SK-N-SH (cell line): ENCODE measurements at regions of chr2 and their contacts with region 1.

Region 1: GRCh38 chr2:27409321-27410073 is at the start of gene PPM1G:
- DNase-seq: peak; percentile 99
- H3K4me3 ChIP-seq: peak within 1 kb of the TSS; percentile 78 to 98
- H3K27ac ChIP-seq: peak within 1 kb of the TSS; percentile 82 to 90
- H3K4me1 ChIP-seq: peaks cover 0 to 6% of the 10 kb centered on the region in 2 experiments; a peak in 2 of 4 replicates
- H3K27me3 ChIP-seq: no peaks in the 10 kb centered on the region
- CTCF ChIP-seq: no peak
- EP300 ChIP-seq: no peak
- RAD21 ChIP-seq: no peak
- polyA plus RNA-seq, gene PPM1G: 99.7 and 113 TPM in 2 replicates

Region 2: DNA sequence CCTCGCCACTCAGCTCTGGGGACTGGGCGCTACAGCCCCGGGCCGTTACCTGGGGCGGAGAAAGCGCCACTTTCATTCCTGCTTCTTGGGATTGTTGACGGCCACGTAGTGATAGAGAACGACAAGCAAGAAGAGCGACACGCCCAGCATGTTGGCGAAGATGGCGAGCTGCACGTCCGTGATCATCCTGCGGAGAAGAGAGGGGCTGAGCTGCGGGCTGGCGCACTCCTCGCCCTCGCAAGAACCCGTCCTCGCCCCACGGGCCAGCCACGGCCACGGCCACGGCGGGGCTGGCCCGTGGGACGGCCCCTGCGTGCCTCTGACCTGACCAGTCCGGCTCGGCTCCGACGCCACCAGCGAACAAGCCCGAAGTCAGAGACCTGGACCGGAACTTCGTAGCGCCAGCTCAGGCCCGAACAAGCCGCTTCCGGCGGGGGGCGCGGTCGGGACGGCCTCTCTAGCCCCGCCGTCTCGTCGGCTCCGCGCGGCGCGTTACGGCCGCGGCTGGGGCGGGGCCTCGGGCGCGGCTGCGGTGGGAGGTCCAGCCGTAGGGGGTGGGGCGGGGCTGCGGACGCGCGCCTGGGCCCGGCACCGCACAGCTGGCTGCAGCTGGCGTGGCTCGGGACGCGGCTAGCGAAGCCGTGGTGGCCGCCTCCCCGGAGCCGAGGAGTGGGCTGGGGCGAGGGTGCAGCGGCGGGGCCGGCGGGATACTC is 338.1 kb before region 1 on chr2 and contains the start of gene OST4:
- CTCF ChIA-PET with region 1: no interaction called
- POLR2A ChIA-PET with region 1: no interaction called
- DNase-seq: peak; percentile 100
- H3K4me3 ChIP-seq: peak within 1 kb of the TSS; percentile 97 to 98
- H3K27ac ChIP-seq: peak within 1 kb of the TSS; percentile 89 to 98
- H3K4me1 ChIP-seq: peaks cover 44 to 66% of the 10 kb centered on the region in 2 experiments
- H3K27me3 ChIP-seq: no peaks in the 10 kb centered on the region
- CTCF ChIP-seq: peak; percentile 8; the same call in 1 of the 2 replicates
- EP300 ChIP-seq: peak in 1 of 2 experiments; percentile 41; a peak in 1 of 4 replicates
- RAD21 ChIP-seq: no peak
- polyA plus RNA-seq, gene OST4: 876 and 1,851 TPM in 2 replicates

Region 3: GRCh38 chr2:27422958-27423357 is 13.5 kb after region 1 on chr2:
- CTCF ChIA-PET with region 1: interaction called, 94 read pairs
- POLR2A ChIA-PET with region 1: interaction called, 66 read pairs
- DNase-seq: no peak
- H3K4me3 ChIP-seq: no peak overlapping the region
- H3K27ac ChIP-seq: no peak overlapping the region
- H3K4me1 ChIP-seq: no peaks in the 10 kb centered on the region
- H3K27me3 ChIP-seq: no peaks in the 10 kb centered on the region
- CTCF ChIP-seq: no peak
- EP300 ChIP-seq: no peak
- RAD21 ChIP-seq: no peak

Region 4: GRCh38 chr2:27509326-27509725 is 99.8 kb after region 1 on chr2:
- CTCF ChIA-PET with region 1: no interaction called
- POLR2A ChIA-PET with region 1: no interaction called
- DNase-seq: no peak
- H3K4me3 ChIP-seq: no peak overlapping the region
- H3K27ac ChIP-seq: no peak overlapping the region
- H3K4me1 ChIP-seq: peaks cover 0 to 4% of the 10 kb centered on the region in 2 experiments; a peak in 1 of 4 replicates
- H3K27me3 ChIP-seq: no peaks in the 10 kb centered on the region; the same call in 1 of the 2 replicates
- CTCF ChIP-seq: no peak
- EP300 ChIP-seq: no peak
- RAD21 ChIP-seq: no peak

Region 5: GRCh38 chr2:27663463-27664249 is 254.2 kb after region 1 on chr2 and contains the starts of genes SLC4A1AP and SUPT7L:
- CTCF ChIA-PET with region 1: interaction called, 5 read pairs
- POLR2A ChIA-PET with region 1: interaction called, 10 read pairs
- DNase-seq: peak; percentile 85
- H3K4me3 ChIP-seq: peak within 1 kb of the TSS; percentile 91 to 99
- H3K27ac ChIP-seq: peak within 1 kb of the TSS; percentile 92 to 100
- H3K4me1 ChIP-seq: peaks cover 16 to 24% of the 10 kb centered on the region in 2 experiments; a peak in 3 of 4 replicates
- H3K27me3 ChIP-seq: no peaks in the 10 kb centered on the region
- CTCF ChIP-seq: no peak
- EP300 ChIP-seq: no peak
- RAD21 ChIP-seq: no peak
- polyA plus RNA-seq, gene SLC4A1AP: 9.4 and 9.8 TPM in 2 replicates
- polyA plus RNA-seq, gene SUPT7L: 49.7 and 69.3 TPM in 2 replicates